ENCODE measurements at regions of chr10 and their contacts with region 1.

Region 1: DNA sequence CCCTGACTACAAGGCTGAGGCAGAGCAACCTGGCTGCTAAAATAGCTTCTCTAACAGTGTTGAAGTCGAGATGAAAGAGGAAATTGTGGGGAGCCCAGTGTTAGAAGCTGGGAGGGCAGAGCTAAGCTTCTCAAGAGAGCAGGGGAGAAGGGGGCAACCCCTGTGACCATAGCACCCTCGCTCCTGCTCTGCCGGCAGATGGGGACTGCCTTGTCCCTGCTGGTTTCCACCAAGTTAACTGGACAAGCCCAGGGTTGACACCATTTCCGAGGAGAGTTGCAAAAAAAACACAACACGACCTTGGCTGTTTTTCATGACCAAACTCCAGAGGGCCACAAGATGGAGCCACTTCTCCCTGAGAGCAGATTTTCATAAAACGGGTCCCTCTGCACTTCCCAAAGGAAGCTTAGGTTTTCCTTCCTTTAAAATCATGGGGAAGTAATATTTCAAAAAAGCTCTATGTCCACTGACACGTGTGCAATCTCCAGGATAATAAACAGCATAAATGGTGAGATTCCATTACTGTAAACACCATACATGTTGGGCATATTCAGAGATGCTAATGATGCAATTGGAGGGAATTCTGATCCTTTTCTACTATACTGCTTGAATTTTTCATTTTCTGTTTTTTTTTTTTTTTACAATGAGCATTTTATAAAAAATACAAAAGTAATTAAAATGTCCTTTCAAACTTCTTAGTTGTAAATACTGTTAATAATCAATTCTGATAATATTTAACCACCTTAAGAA is 140.4 kb downstream of the PIP4K2A start:
- DNase-seq: no peak
- H3K4me3 Mint-ChIP-seq: no peak overlapping the region
- H3K27ac Mint-ChIP-seq: peak overlapping the region; percentile 22
- H3K4me1 Mint-ChIP-seq: peaks cover 33% of the 10 kb centered on the region
- H3K27me3 Mint-ChIP-seq: no peaks in the 10 kb centered on the region

Region 2: DNA sequence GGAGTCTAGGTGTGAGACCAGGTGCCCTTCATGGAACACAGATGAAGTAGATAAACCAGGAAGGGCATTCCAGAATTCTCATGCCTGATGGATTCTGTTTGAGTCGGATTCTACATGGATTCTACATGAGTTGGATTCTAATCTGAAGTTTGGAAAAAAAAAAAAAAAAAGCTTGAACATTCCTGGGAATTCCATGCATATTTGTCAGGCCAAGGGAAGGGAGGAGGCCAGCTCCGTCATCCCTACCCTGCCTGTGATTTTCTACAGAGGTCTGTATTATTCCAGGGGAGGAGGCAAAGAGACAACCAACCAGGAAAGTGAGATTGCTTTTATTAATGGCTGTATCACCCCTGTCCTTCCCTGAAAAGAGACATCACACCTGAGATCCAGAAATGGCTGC is 328.4 kb before region 1 on chr10:
- intact Hi-C with region 1: loop called (anchors 2 kb)
- DNase-seq: no peak
- H3K4me3 Mint-ChIP-seq: no peak overlapping the region
- H3K27ac Mint-ChIP-seq: peak overlapping the region; percentile 59
- H3K4me1 Mint-ChIP-seq: peaks cover 42% of the 10 kb centered on the region
- H3K27me3 Mint-ChIP-seq: peaks cover 3% of the 10 kb centered on the region

Region 3: DNA sequence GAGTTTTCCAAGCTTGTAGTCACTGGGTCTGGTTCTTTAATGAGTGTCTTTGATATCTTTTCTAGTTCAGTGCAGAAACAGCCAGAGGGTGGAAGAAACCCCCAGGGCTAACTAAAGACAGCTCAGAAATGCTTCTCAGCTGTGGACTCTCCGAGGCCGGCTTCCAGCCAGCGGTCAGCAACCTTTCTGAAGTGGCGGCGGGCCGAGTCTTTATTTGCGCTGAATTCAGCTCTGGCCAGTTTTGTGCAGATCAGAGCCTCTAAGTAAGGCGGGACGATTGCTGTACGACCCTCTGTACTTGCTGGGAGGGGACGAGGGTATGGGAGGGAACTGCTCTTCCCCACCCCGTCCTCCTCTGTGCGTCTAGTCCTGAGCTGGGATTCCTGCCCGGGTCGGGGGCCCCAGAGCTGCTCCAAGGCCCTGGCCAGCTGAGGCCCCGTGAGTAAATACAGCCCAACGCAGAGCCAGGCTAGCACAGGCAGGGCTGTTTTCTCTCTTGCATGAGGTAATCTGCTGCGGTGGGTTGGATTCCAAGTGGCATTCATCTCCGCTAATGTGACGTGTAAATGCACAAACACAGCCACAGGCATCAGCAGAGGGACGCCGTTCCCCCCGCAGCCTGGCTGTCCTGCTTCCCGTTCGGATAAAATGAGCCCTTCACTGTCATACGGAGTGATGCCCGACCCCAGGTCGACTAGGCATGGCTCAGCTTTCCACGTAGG is 19.4 kb before region 1 on chr10:
- intact Hi-C with region 1: no loop called
- DNase-seq: no peak
- H3K4me3 Mint-ChIP-seq: no peak overlapping the region
- H3K27ac Mint-ChIP-seq: no peak overlapping the region
- H3K4me1 Mint-ChIP-seq: peaks cover 15% of the 10 kb centered on the region
- H3K27me3 Mint-ChIP-seq: no peaks in the 10 kb centered on the region

Region 4: GRCh38 chr10:22599048-22599561 is 25.1 kb after region 1 on chr10:
- intact Hi-C with region 1: loop called (anchors 2 kb)
- DNase-seq: no peak
- H3K4me3 Mint-ChIP-seq: no peak overlapping the region
- H3K27ac Mint-ChIP-seq: peak overlapping the region; percentile 47
- H3K4me1 Mint-ChIP-seq: peaks cover 49% of the 10 kb centered on the region
- H3K27me3 Mint-ChIP-seq: no peaks in the 10 kb centered on the region

Region 5: DNA sequence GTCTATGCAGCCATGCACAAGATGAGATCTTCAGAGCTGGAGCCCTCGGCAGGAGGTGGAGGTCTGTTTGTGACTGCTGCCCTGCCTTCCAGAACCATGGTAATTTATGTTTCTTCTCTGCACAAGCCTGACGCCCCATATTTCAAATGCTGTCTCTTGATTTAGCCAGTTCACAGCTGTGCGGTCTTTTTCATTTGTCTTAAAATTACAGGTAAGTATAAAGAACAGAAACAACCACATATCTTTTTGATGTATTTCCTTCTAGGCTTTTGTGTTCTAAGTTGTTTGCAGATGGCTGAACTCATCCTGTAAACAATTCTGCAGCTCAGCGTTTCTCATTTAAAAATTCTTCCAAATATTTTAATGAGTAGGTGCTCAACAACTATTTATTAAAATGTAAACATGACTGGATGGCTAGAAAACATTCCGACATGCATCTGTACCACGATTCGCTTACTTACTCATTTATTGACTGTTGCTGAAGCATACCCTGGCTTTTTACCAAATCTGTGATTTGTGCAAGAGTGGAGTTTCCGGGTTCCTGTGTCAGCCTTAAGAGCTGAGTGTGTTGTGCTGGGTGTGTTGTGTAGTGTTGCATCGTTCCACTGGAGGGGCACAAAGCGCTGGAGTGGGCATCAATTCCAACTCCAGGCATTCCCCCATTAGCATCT is 81.5 kb after region 1 on chr10:
- intact Hi-C with region 1: loop called (anchors 5 kb)
- DNase-seq: no peak
- H3K4me3 Mint-ChIP-seq: peak overlapping the region; percentile 49
- H3K27ac Mint-ChIP-seq: peak overlapping the region; percentile 85
- H3K4me1 Mint-ChIP-seq: peaks cover 83% of the 10 kb centered on the region
- H3K27me3 Mint-ChIP-seq: no peaks in the 10 kb centered on the region

Region 6: DNA sequence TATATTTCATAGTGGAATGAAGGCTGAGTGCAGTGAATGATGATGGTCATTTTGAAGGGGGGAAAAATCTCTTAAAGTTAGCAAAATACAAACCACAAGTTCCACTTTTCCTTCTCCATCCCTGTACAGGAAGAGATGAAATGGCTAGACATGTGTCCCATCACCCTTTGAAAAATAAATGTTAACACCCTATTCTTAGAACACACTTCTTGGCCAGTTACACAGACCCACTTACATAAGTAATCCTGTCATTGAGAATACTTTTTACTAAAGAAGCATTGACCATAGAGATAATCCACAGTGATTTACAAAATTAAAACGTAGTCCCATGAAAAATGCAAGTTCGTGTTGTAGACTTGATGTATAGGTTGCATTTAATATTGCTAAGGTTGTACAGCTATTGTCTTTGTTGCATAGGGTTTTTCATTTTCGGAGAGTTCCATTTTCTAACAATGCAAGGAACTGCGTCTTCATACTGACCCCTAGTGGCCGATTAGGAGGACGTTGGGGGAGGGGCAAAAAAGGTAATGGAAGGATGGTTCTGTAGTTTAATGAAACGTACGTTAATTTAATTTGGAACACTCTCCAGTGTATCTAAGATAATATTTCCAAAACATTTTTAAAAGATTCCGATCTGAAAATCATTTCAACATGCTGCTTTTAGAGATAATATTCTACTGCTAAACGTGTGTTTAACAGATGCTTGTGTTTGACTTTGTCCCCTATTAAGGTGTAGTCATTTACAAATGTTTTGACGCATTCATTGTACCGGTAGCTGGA is 414.8 kb after region 1 on chr10:
- intact Hi-C with region 1: loop called (anchors 2 kb)
- DNase-seq: peak; percentile 47
- H3K4me3 Mint-ChIP-seq: no peak overlapping the region
- H3K27ac Mint-ChIP-seq: no peak overlapping the region
- H3K4me1 Mint-ChIP-seq: peaks cover 14% of the 10 kb centered on the region
- H3K27me3 Mint-ChIP-seq: peaks cover 16% of the 10 kb centered on the region